Colonic mucosa (tissue), 4 donors: ENCODE measurements at regions of chr14 and their contacts with region 1.

Region 1: DNA sequence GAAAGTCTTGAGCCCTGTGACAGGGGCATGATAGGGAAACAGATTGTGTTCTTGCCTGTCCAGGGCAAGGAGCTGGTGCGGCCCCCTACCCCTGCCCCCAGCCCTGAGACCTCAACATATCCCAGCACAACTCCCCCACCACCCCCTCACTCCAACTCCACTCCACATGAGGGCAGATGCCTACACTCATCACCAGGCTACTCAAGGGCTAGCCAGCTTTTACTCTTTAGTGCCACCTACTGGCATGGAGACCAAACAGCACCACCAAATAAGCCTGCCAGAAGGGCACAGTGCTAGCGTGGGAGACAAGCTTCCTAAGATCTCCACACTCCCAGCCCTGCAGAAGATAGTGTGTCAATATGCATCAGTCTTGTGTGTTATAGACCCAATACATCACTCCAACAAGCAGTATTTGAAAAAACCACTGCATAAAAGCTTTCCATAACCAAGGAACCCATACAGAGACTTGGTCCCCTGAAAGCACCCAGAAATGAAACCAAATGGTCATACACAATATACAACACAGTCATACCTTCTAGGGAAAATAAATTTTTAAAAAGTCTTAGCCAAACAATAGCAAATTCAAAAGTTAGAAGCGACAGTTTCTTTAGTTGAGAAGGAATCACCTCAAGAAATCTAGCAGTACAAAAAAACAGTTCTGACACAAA is 154.4 kb downstream of the KCNK10 start:
- DNase-seq: peak; percentile 58
- H3K4me3 ChIP-seq: no peak overlapping the region
- H3K27ac ChIP-seq: no peak overlapping the region
- H3K4me1 ChIP-seq: no peaks in the 10 kb centered on the region
- H3K27me3 ChIP-seq: no peaks in the 10 kb centered on the region
- CTCF ChIP-seq: peak; percentile 67

Region 2: DNA sequence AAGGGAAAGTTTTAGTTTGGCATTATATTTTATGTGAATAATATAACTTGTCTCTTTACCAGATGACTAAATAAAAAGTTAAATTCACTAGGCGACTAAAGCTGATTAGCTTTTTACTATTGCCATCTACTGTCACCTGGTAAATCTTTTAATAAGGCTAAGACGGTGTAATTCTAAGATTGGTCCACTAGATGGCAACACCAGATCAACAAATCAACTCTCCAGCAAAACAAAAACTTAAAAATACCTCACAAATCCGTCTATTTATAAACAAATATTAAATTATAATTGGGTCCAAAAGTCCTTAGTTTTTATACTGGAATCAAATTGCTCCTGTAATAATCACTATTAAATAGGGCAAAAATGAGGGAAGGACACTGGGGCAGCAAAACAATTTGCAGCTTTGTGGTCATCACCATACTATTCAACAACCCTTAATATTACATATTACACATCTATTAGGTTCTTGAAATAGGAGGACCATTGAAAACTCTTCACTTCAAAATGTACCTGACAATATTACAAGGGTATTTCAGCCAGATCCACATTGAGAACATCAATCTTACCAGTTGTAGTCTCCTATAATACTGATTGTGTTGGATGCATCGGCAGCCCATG is 223.5 kb before region 1 on chr14:
- intact Hi-C with region 1: loop called (anchors 5 kb)
- DNase-seq: no peak
- H3K4me3 ChIP-seq: no peak overlapping the region
- H3K27ac ChIP-seq: no peak overlapping the region
- H3K4me1 ChIP-seq: no peaks in the 10 kb centered on the region
- H3K27me3 ChIP-seq: no peaks in the 10 kb centered on the region
- CTCF ChIP-seq: peak; percentile 59

Region 3: GRCh38 chr14:88013750-88014349 is 154.8 kb before region 1 on chr14:
- intact Hi-C with region 1: loop called (anchors 2 kb)
- DNase-seq: peak; percentile 70
- H3K4me3 ChIP-seq: no peak overlapping the region
- H3K27ac ChIP-seq: no peak overlapping the region
- H3K4me1 ChIP-seq: no peaks in the 10 kb centered on the region
- H3K27me3 ChIP-seq: no peaks in the 10 kb centered on the region
- CTCF ChIP-seq: peak; percentile 86